Left cardiac atrium (tissue), 4 donors: ENCODE measurements at regions of chr1 and their contacts with region 1.

Region 1: GRCh38 chr1:46724991-46725735 is 6.2 kb upstream of the EFCAB14 start:
- DNase-seq: peak; percentile 54
- ATAC-seq: peak; percentile 89 to 94

Region 2: GRCh38 chr1:46442317-46443161 is 282.6 kb before region 1 on chr1:
- intact Hi-C with region 1: loop called in 1 of 2 experiments (anchors 5 kb)
- DNase-seq: peak; percentile 78
- ATAC-seq: peak; percentile 76 to 78

Region 3: GRCh38 chr1:46520063-46520911 is 204.9 kb before region 1 on chr1:
- intact Hi-C with region 1: no loop called
- DNase-seq: no peak
- ATAC-seq: peak; percentile 31 to 65